GM18951 (cell line): ENCODE measurements at regions of chr9 and their contacts with region 1.

Region 1: GRCh38 chr9:115013998-115014397 is 83.6 kb upstream of the TNFSF8 start:
- POLR2A ChIP-seq: no peak

Region 2: DNA sequence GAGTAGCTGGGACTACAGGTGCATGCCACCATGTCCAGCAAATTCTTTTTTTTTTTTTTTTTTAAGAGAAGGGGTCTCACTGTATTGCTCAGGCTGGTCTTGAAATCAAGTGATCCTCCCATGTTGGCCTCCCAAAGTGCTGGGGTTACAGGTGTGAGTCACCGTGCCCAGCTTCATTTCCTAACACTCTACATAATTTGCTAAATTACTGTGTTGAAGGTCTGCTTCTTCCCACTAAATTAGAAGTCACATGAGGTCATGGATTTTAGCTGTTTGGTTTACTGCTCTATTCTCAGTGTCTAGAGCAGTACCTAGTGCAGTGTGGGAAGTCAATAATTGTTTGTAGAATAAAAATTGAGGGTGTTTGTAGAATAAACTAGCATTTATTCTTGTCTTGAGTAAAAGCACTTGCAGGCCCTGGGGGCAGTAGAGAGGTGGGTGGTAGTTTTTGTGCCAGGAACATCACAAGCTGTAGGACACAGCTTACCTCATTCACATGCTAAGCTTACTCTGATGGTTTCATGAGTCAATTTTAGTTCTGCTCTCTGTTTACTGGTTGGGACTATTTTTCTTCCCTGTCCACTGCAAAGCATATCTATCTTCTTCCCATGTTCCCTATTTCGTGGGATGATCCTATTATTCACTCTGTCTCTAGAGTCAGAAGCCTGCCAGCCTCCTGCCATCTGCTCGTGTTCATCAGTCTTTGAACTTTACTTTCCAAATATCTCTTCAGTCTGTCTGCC is 339.0 kb before region 1 on chr9:
- in situ Hi-C with region 1: loop called (anchors 5 kb)
- POLR2A ChIP-seq: no peak

Region 3: DNA sequence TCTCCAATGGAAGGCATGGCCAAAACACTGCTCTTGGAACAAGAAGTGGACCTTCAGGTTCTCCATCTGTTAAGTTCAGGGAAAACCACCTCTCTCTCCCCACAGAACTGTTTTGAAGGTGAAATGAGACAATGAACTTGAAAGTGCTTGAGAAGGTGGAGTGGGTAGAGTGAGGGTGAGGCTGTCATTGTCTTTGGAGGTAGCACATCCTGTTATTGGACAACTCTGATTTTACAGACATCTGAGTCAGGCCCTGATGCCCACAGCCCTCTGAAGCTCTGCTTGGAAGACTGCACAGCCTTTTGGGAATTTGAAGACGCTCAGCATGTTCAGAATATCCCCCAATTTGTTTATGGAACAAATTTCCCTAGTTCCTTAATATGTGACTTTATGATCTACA is 304.4 kb before region 1 on chr9:
- in situ Hi-C with region 1: no loop called
- POLR2A ChIP-seq: no peak

Region 4: GRCh38 chr9:114738581-114739316 is 275.2 kb before region 1 on chr9:
- in situ Hi-C with region 1: loop called (anchors 5 kb)
- POLR2A ChIP-seq: no peak

Region 5: GRCh38 chr9:114906908-114907571 is 107.0 kb before region 1 on chr9:
- in situ Hi-C with region 1: loop called (anchors 5 kb)
- POLR2A ChIP-seq: no peak